ENCODE measurements at regions of chr12 and their contacts with region 1.

Region 1: DNA sequence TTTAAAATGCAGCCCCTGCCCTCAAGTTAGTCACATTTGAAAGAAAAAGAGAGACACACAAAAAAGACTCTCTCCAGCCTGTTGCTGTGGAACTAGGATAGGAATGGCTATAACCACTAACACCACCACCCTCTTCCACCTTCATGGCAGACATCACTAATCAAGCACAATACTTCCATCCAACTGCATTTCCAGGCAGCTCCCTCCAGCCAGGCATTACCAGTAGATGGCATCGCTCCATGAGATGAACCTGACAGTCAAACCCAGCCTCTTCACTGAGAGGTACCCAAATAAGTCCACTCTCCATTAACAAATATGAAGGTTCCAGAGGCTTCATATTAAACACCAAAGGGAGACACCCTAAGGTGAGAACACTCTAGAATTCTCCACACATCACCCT is 24.4 kb downstream of the SLC8B1 start:
- DNase-seq: no peak
- ATAC-seq: no peak
- H3K4me3 ChIP-seq: no peak overlapping the region
- H3K27ac ChIP-seq: no peak overlapping the region
- H3K4me1 ChIP-seq: no peaks in the 10 kb centered on the region
- H3K27me3 ChIP-seq: no peaks in the 10 kb centered on the region

Region 2: DNA sequence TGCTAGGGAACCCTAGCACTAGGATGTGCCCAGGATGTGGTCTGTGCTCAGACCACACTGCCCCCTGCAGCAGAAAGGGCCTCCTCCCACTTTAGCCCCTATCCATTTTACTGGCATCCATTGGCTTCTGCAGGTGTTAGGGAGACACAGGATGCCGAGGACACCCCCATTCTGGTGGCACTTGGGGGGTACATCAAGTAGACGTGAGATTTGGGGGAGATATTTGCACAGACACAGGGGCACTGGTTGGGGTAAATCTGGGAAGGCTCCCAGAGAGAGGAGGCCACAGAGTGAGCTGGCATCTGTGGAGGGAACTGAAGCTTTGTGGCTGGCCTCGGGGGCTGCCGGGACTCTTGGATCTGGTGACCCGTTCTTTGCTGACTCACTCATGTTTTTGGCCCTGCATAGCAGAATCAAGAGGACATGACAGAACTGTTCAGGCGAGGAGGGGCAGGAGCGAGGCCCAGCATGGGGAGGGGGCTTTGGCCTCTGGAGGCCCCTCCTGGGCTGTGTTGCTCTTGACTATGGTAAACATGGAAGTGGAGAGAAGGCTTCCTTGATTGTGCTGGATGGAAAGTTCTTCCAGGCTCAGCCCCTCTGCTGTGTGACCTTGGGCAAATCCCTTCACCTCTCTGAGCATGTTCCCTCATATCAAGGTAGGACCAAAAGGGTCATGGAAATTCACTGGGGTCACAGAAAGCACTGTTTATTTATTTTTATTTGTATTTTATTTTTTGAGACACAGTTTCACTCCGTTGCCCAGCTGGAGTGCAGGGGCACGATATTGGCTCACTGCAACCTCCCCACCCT is 49.7 kb after region 1 on chr12:
- intact Hi-C with region 1: no loop called
- DNase-seq: peak in 2 of 3 donors; percentile 40 to 55
- ATAC-seq: peak in 1 of 2 donors; percentile 2
- H3K4me3 ChIP-seq: no peak overlapping the region
- H3K27ac ChIP-seq: no peak overlapping the region
- H3K4me1 ChIP-seq: no peaks in the 10 kb centered on the region
- H3K27me3 ChIP-seq: no peaks in the 10 kb centered on the region

Region 3: GRCh38 chr12:113422030-113422885 is 111.8 kb after region 1 on chr12 and contains the start of gene SDSL:
- intact Hi-C with region 1: loop called (anchors 5 to 10 kb)
- DNase-seq: peak; percentile 69 to 87 (median 83)
- ATAC-seq: peak; percentile 91 to 92
- H3K4me3 ChIP-seq: peak within 1 kb of the TSS; percentile 45
- H3K27ac ChIP-seq: no peak within 1 kb of the TSS
- H3K4me1 ChIP-seq: no peaks in the 10 kb centered on the region
- H3K27me3 ChIP-seq: no peaks in the 10 kb centered on the region
- total RNA-seq, gene SDSL: 4.2 to 9.5 (median 5.7) TPM

Measured in right cardiac atrium (tissue), 5 donors.